ENCODE measurements at regions of chr11 and their contacts with region 1.

Region 1: DNA sequence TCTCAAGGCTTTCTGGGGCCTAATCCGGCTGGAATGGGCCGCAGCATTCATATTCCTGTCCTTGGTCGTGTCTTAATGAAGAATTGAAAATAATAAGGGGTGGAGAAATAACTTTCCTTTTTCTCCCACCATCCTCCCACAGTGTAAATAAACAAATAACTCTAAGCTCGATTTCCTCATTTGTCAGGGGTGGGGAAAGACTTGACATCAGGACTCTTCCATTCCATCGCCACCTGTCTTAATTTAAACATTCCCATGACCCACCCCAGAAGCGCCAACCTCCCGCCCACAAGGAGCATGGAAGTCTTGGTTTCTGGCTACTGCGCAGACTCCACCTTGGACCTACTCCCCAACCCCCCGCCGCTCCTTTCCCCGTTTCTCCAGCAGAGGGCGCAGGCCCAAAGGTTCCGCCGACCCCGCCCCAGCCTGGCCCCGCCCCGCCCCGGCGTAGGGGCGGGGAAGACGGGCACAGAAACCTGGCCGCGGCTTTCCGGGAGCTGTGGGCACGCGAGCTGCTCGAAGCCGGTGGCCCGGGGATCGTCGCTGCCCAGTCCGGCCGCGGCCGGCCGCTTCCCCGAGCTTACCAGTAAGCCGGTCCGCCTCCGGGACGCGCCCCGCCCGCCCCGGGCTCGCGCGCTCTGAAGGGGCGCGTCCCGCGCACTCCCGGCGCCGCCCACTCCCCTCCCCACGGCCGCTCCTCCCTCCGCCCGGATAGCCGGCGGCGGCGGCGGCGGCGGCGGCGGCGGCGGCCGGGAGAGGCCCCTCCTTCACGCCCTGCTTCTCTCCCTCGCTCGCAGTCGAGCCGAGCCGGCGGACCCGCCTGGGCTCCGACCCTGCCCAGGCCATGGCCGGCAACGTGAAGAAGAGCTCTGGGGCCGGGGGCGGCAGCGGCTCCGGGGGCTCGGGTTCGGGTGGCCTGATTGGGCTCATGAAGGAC is at the start of gene CBL:
- DNase-seq: peak; percentile 89
- H3K4me3 Mint-ChIP-seq: peak within 1 kb of the TSS; percentile 93
- H3K27ac Mint-ChIP-seq: peak within 1 kb of the TSS; percentile 94
- H3K4me1 Mint-ChIP-seq: peaks cover 22% of the 10 kb centered on the region
- H3K27me3 Mint-ChIP-seq: peaks cover 2% of the 10 kb centered on the region
- total RNA-seq, gene CBL: 38.6 and 39.6 TPM in 2 replicates

Region 2: DNA sequence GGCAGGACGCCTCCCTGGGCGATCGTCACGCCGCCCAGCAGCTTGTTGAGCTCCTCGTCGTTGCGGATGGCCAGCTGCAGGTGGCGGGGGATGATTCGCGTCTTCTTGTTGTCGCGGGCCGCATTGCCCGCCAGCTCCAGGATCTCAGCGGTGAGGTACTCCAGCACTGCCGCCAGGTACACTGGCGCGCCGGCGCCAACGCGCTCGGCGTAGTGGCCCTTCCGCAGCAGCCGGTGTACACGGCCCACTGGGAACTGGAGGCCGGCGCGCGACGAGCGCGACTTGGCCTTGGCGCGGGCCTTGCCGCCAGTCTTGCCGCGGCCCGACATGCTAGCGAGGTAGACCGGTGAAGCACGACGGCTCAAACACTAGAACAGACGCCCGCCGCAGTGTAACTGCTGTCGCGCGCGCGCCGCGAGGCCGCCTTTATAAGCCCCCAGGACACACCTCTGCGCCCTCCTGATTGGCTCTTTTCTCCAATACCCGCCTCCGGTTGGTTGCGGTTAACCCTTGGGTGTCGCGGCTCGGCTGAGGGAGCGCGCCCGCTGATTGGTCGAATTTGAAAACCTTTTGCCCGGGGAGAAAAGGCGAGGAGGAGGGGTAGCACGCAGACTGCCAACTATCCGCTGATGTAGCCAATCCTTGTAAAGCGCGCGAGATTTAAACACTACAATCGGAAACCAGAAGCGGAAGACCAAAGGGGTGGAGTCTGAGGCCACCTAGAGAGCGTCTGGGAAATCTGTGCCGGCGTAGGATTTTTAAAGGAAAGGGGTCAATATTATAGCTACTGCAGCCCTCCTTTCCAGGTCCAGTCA is 110.6 kb before region 1 on chr11:
- intact Hi-C with region 1: loop called (anchors 2 kb)
- DNase-seq: peak; percentile 99
- H3K4me3 Mint-ChIP-seq: peak overlapping the region; percentile 89
- H3K27ac Mint-ChIP-seq: peak overlapping the region; percentile 89
- H3K4me1 Mint-ChIP-seq: peaks cover 50% of the 10 kb centered on the region
- H3K27me3 Mint-ChIP-seq: peaks cover 2% of the 10 kb centered on the region

Region 3: GRCh38 chr11:119218141-119218878 is 12.5 kb after region 1 on chr11:
- intact Hi-C with region 1: loop called (anchors 1 kb)
- DNase-seq: no peak
- H3K4me3 Mint-ChIP-seq: no peak overlapping the region
- H3K27ac Mint-ChIP-seq: peak overlapping the region; percentile 69
- H3K4me1 Mint-ChIP-seq: peaks cover 29% of the 10 kb centered on the region
- H3K27me3 Mint-ChIP-seq: no peaks in the 10 kb centered on the region

Region 4: GRCh38 chr11:119262668-119263351 is 57.0 kb after region 1 on chr11:
- intact Hi-C with region 1: loop called (anchors 2 kb)
- DNase-seq: no peak
- H3K4me3 Mint-ChIP-seq: no peak overlapping the region
- H3K27ac Mint-ChIP-seq: no peak overlapping the region
- H3K4me1 Mint-ChIP-seq: peaks cover 52% of the 10 kb centered on the region
- H3K27me3 Mint-ChIP-seq: no peaks in the 10 kb centered on the region

Region 5: GRCh38 chr11:119323538-119324033 is 117.7 kb after region 1 on chr11:
- intact Hi-C with region 1: loop called (anchors 5 kb)
- DNase-seq: peak; percentile 65
- H3K4me3 Mint-ChIP-seq: no peak overlapping the region
- H3K27ac Mint-ChIP-seq: no peak overlapping the region
- H3K4me1 Mint-ChIP-seq: peaks cover 16% of the 10 kb centered on the region
- H3K27me3 Mint-ChIP-seq: peaks cover 6% of the 10 kb centered on the region